Dorsolateral prefrontal cortex (tissue), 120 donors: ENCODE measurements at regions of chr17 and their contacts with region 1.

Region 1: GRCh38 chr17:3529817-3530741 is 27.5 kb downstream of the TRPV3 start:
- DNase-seq: peak in 9 of 10 donors; percentile 33 to 77 (median 63)
- H3K4me3 ChIP-seq: peak overlapping the region in 37 of 59 donors; percentile 0 to 47 (median 30)
- H3K27ac ChIP-seq: peak overlapping the region; percentile 86 to 100 (median 98)
- H3K27me3 ChIP-seq: no peaks in the 10 kb centered on the region
- CTCF ChIP-seq: no peak

Region 2: DNA sequence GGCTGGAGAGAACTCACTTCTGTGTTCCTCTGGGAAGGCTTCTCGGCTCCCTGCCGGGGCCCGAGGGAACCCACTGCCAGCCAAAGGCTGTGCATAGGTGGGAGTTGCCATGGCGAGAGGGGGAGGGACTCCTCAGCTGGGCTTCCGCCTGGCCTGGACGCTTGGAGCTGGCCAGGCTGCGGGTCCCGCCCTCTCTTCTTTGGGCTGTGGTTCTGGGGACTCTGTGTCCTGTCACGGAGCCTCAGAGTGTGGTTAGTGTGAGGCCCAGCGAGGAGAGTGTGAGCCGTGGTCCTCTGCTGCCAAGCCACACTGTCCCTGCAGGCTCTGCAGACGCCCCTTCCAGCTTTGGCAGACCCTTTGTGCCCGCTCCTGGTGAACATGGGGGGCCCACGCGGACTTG is 589.7 kb before region 1 on chr17:
- intact Hi-C with region 1: no loop called
- DNase-seq: peak in 7 of 10 donors; percentile 23 to 68 (median 47)
- H3K4me3 ChIP-seq: peak overlapping the region in 3 of 59 donors; percentile 9 to 30 (median 9)
- H3K27ac ChIP-seq: peak overlapping the region in 44 of 59 donors; percentile 1 to 82 (median 46)
- H3K27me3 ChIP-seq: no peaks in the 10 kb centered on the region
- CTCF ChIP-seq: no peak

Region 3: GRCh38 chr17:3502466-3502865 is 27.6 kb before region 1 on chr17:
- intact Hi-C with region 1: loop called in 1 of 2 experiments (anchors 1 kb)
- DNase-seq: peak in 8 of 10 donors; percentile 7 to 73 (median 60)
- H3K4me3 ChIP-seq: peak overlapping the region in 8 of 59 donors; percentile 2 to 31 (median 18)
- H3K27ac ChIP-seq: peak overlapping the region; percentile 45 to 99 (median 94)
- H3K27me3 ChIP-seq: no peaks in the 10 kb centered on the region
- CTCF ChIP-seq: peak in 3 of 56 donors; percentile 12 to 14 (median 13)

Region 4: GRCh38 chr17:3512505-3513171 is 17.4 kb before region 1 on chr17:
- intact Hi-C with region 1: loop called in 1 of 2 experiments (anchors 1 kb)
- DNase-seq: peak; percentile 19 to 91 (median 86)
- H3K4me3 ChIP-seq: peak overlapping the region in 33 of 59 donors; percentile 1 to 46 (median 22)
- H3K27ac ChIP-seq: peak overlapping the region; percentile 66 to 99 (median 95)
- H3K27me3 ChIP-seq: no peaks in the 10 kb centered on the region
- CTCF ChIP-seq: peak in 6 of 56 donors; percentile 9 to 29 (median 16)